ENCODE measurements at regions of chr6 and their contacts with region 1.

Region 1: GRCh38 chr6:27049863-27050781 is 197.4 kb upstream of the PRSS16 start:
- DNase-seq: no peak
- ATAC-seq: no peak
- H3K4me3 ChIP-seq: no peak overlapping the region
- H3K27ac ChIP-seq: no peak overlapping the region
- H3K4me1 ChIP-seq: no peaks in the 10 kb centered on the region
- H3K27me3 ChIP-seq: no peaks in the 10 kb centered on the region
- CTCF ChIP-seq: no peak

Region 2: DNA sequence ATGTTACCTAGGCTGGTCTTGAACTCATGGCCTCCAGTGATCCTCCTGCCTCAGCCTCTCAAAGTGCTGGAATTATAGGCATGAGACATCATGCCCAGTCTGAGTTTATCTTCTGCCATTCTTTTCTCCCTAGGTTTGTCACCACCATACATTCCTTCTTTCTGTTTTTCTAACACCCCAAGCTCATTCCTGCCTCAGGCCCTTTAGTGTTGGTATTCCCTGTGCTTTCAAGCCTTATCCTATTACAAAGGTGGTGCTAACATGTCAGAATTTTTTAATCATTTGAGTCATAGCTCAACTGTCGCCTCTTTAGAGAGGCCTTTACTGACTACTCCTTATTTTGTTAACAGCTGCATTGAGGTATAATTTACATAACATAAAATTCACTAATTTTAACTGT is 23.8 kb before region 1 on chr6:
- CTCF ChIA-PET with region 1: no interaction called
- POLR2A ChIA-PET with region 1: no interaction called
- in situ Hi-C with region 1: no loop called
- intact Hi-C with region 1: loop called (anchors 1 kb)
- DNase-seq: no peak
- ATAC-seq: no peak
- H3K4me3 ChIP-seq: no peak overlapping the region
- H3K27ac ChIP-seq: no peak overlapping the region
- H3K4me1 ChIP-seq: no peaks in the 10 kb centered on the region
- H3K27me3 ChIP-seq: no peaks in the 10 kb centered on the region
- CTCF ChIP-seq: no peak

Region 3: GRCh38 chr6:27078734-27079357 is 28.7 kb after region 1 on chr6:
- CTCF ChIA-PET with region 1: no interaction called
- POLR2A ChIA-PET with region 1: interaction called, 11 read pairs
- in situ Hi-C with region 1: no loop called
- intact Hi-C with region 1: no loop called
- DNase-seq: peak; percentile 62
- ATAC-seq: peak; percentile 98
- H3K4me3 ChIP-seq: peak overlapping the region; percentile 46 to 51
- H3K27ac ChIP-seq: no peak overlapping the region; the same call in 1 of the 2 replicates
- H3K4me1 ChIP-seq: 0 out of 2 replicates have a peak, but pooled peaks cover 4% of the 10 kb centered on the region
- H3K27me3 ChIP-seq: no peaks in the 10 kb centered on the region
- CTCF ChIP-seq: peak; percentile 81